ENCODE measurements at regions of chr17 and their contacts with region 1.

Region 1: DNA sequence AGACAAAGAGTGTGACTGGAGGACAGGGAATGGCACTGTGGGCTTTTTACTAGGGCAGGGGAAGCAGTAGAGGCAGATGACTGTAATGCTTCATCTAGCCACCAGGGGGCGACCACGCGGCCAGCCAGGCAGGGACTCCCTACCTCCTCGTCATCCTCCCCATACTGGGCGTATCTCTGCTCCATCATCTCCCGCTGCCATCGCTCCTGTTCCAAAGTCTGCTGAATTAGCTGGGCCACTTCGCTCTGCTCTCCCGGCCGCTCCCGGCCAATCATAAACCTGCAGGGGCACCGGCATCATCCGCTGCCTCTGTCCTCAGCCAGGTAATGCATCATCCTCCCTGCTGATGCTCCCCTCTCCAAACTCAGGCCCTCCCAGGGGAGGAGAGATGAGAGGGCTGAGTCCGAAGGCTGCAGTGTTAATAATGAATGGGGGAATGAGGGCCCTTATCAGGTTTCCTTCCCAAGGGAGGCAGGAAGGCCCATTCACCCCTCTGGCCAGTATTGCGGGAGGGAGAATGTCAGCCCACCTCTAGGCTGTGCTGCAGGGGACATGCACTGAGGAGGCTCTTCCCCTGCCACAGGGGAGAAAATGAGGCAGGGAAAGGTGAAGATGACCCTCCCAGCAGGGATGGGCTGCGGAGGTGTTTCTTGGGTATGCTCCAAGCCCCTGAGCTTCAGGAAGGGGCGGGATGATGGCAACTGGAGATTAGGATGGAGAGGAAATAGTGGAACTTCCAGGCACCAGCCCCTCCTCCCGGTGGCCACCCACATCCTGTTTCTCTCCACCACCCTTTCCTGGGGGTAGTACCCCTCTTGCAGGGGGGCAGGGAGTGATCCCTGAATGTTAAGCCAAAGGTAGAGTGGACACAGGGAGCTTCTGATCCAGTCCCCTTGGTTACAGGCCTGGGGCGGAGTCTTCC is 10.3 kb upstream of the SAMD14 start:
- DNase-seq: peak; percentile 57
- H3K4me3 ChIP-seq: no peak overlapping the region
- H3K27ac ChIP-seq: no peak overlapping the region
- H3K4me1 ChIP-seq: no peaks in the 10 kb centered on the region
- H3K27me3 ChIP-seq: no peaks in the 10 kb centered on the region
- CTCF ChIP-seq: peak; percentile 82 to 86

Region 2: DNA sequence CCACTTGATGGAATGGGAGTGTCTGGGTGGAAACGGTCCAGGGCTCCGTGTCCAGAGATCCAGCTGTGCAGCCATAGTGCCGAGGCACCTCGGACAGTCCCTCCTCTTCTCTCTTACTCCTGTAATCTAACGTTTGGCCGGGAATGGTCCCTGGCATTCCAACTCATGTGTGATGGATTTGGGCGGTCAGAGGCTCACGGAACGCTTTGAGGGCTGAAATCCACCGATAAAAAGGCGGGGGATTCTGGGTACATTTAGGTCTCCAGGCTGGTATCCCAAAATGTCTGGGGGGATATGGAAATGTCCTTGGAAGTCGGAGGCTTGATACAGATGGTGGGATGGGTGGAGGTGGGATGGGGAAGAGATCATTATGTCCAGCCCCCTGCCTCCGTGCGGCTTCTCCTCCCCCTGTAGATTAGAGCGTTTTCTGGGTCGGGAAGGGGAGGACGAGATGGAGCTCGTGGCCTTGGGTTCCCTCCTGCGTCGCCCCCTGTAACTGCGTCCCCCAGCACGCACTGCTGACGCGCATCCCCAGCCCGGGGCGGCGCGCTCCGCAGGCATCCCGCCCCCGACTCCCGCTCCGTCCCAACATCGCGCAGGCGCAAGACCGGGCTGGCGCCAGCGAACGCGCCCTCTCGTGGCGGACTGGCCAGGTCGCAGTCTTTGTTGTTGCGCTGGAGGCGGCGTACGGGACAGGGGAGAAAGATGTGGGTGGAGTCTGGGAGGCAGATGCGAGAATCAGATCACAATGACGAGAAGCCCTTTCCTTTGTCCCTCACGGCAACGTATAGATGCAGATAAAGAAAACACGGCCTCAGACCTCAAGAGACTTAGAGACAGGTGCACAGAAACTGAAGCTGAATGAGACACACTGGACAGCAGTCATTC is 21.1 kb after region 1 on chr17:
- CTCF ChIA-PET with region 1: no interaction called
- dilution Hi-C with region 1: no loop called
- in situ Hi-C with region 1: no loop called
- intact Hi-C with region 1: loop called (anchors 1 kb)
- DNase-seq: peak; percentile 81
- H3K4me3 ChIP-seq: peak overlapping the region; percentile 10 to 61 (median 55)
- H3K27ac ChIP-seq: no peak overlapping the region
- H3K4me1 ChIP-seq: peaks cover 12% of the 10 kb centered on the region
- H3K27me3 ChIP-seq: no peaks in the 10 kb centered on the region
- CTCF ChIP-seq: peak; percentile 84 to 96

Measured in mammary epithelial cell (primary cell).